BJ (cell line): ENCODE measurements at regions of chrX and their contacts with region 1.

Region 1: DNA sequence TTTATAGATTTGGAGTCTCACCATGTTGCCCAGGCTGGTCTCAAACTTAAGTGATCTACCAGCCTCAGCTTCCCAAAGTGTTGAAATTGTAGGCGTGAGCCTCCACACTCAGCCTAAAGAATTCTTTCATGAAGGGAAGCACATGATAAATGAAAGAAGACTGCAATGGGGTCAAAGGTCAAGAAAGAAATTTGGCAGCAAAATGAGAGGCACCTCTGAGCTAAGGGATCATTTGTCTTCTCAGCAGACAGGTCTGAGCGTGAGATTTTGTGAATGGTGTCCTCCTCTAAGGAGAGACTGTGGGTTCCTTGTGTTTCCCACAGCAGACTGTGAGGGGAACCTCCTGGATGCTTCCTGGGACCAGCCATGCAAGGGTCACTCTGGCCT is 57.5 kb upstream of the EGFL6 start:
- DNase-seq: no peak
- H3K4me3 ChIP-seq: no peak overlapping the region
- H3K27me3 ChIP-seq: no peaks in the 10 kb centered on the region
- CTCF ChIP-seq: no peak

Region 2: GRCh38 chrX:13646154-13646549 is 134.2 kb after region 1 on chrX:
- CTCF ChIA-PET with region 1: interaction called, 44 read pairs
- POLR2A ChIA-PET with region 1: no interaction called
- DNase-seq: no peak
- H3K4me3 ChIP-seq: no peak overlapping the region
- H3K27me3 ChIP-seq: no peaks in the 10 kb centered on the region
- CTCF ChIP-seq: peak; percentile 75

Region 3: DNA sequence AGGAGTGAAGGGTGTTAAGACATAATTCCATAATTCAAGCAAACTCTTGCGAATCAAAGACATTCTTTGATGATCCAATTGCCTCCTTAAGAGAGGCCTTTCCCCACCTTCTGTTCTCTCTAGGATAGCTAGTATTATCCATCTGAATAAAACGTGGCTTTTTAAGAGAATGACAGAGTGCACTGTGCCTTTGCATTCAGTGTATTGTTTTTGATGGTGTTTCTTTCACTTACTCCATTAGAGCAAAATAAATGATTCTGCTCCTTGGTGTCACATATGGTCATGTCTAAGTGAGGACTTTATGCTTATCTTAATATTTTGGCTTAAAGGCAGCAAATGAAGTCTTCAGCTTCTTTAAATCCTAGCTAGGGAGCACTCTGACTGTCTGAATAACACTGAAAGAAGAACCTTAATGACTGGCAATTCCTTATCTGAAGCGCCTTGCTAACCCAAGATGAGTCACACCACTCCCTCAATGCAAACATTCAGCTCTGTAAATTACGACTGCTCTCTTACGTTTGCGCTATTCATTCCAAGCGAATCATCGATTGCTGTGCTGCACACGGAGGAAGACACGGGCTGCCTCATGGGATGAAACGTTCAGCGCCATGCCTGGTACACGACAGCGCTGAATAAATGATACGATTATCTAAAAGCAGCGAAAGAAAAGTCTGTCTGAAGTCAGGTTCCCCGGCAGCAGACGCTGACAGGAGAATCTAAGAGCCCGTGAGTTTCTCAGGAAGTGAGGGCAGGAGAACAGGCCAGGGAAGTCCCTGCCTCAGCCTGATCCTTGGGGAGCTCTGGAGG is 552.9 kb after region 1 on chrX:
- CTCF ChIA-PET with region 1: no interaction called
- POLR2A ChIA-PET with region 1: no interaction called
- DNase-seq: no peak
- H3K4me3 ChIP-seq: no peak overlapping the region
- H3K27me3 ChIP-seq: no peaks in the 10 kb centered on the region
- CTCF ChIP-seq: no peak